Posterior vena cava (tissue), 2 donors: ENCODE measurements at regions of chr2 and their contacts with region 1.

Region 1: GRCh38 chr2:180618570-180618969 is 361.8 kb upstream of the UBE2E3 start:
- DNase-seq: no peak

Region 2: DNA sequence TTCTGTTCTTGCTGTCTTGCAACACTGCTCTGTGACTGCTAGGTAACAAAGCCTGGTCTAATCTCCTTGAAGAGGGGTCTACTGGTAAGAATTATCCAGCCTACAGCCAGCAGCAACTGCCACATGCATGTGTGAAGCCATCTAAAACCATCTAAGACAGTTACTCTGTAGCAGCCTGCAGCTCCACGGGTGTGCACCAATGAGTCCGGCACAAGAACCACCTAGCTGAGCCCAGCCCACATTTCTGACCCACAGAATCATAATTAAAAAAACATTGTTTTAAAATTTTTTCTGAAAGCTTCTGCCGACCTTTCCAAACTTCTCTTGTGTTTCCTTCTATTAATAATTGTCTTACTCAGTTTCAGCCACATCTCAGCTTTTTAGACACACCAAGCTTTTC is 859.9 kb before region 1 on chr2:
- intact Hi-C with region 1: no loop called
- DNase-seq: no peak

Region 3: GRCh38 chr2:180542511-180542910 is 76.1 kb before region 1 on chr2:
- intact Hi-C with region 1: no loop called
- DNase-seq: no peak

Region 4: DNA sequence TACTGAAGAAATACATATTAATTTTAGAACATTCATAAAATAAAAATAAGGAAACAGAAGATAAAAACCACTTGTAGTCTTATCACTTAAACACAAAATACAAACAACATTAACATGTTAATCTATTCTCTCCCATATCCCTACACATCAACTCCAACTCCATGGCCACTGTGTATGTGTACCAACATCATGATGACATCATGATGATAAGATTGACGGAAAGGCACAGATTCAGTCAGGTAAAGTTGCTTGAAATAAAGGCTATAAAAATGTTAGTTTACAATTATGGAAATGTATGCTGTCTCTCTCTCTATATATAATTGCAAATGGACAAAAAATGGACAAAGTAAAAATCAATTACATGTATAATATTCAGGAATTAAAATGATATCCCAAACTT is 26.6 kb before region 1 on chr2:
- intact Hi-C with region 1: loop called in 1 of 2 experiments (anchors 2 kb)
- DNase-seq: no peak